Activated B cell treated with CpG ODN at 0.5 μM for 24 hours (primary cell): ENCODE measurements at regions of chr9 and their contacts with region 1.

Region 1: GRCh38 chr9:80085668-80086067 is 513.9 kb downstream of the TLE4 start:
- DNase-seq: no peak
- ATAC-seq: no peak
- H3K4me3 Mint-ChIP-seq: no peak overlapping the region
- H3K27ac Mint-ChIP-seq: peak overlapping the region; percentile 59
- H3K4me1 Mint-ChIP-seq: peaks cover 45% of the 10 kb centered on the region
- H3K27me3 Mint-ChIP-seq: no peaks in the 10 kb centered on the region
- CTCF ChIP-seq: no peak

Region 2: DNA sequence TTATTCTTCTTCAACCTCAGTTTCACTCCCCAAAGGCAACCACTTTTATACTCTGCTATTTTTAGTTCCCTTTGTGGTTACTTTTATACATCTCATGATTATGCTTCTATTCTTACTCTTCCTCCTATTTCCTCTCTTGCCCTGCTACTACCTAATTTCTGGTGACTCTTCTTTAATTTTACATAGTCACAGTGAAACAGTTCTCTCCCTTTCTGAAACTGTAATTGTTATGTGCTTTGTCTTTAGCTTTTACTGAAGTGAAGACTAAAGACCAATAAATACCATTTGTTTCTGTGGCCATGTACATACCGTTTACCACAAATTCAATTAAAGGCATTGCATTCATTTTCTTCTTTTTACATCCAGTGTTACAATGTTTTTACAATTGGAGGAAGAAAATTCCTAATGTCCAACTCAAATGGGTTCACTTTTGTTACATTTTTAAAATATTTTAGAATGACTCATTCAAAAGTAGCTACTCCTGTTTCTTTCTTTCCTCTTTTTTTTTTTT is 1378.1 kb before region 1 on chr9:
- CTCF ChIA-PET with region 1: no interaction called
- POLR2A ChIA-PET with region 1: no interaction called
- intact Hi-C with region 1: loop called (anchors 5 kb)
- DNase-seq: no peak
- ATAC-seq: peak; percentile 78
- H3K4me3 Mint-ChIP-seq: peak overlapping the region; percentile 8
- H3K27ac Mint-ChIP-seq: peak overlapping the region; percentile 0
- H3K4me1 Mint-ChIP-seq: peaks cover 30% of the 10 kb centered on the region
- H3K27me3 Mint-ChIP-seq: no peaks in the 10 kb centered on the region
- CTCF ChIP-seq: no peak